ENCODE measurements at regions of chr11 and their contacts with region 1.

Region 1: GRCh38 chr11:1050581-1051355 is 14.2 kb upstream of the MUC6 start:
- DNase-seq: peak; percentile 54 to 87 (median 59)
- ATAC-seq: peak; percentile 83 to 92 (median 88)
- H3K4me3 ChIP-seq: no peak overlapping the region
- H3K27ac ChIP-seq: no peak overlapping the region
- H3K4me1 ChIP-seq: peaks cover 0 to 23% (median 0%) of the 10 kb centered on the region in 12 donors
- H3K27me3 ChIP-seq: peaks cover 0 to 66% (median 12%) of the 10 kb centered on the region in 9 donors
- CTCF ChIP-seq: peak; percentile 74 to 88 (median 83)
- POLR2A ChIP-seq: no peak

Region 2: GRCh38 chr11:848380-848931 is 202.3 kb before region 1 on chr11:
- intact Hi-C with region 1: loop called in 8 of 10 experiments (anchors 1 to 5 kb)
- DNase-seq: peak in 1 of 5 donors; percentile 61
- ATAC-seq: peak in 2 of 4 donors; percentile 7 to 15
- H3K4me3 ChIP-seq: peak overlapping the region in 2 of 12 donors; percentile 57 to 59
- H3K27ac ChIP-seq: no peak overlapping the region
- H3K4me1 ChIP-seq: peaks cover 2 to 83% (median 43%) of the 10 kb centered on the region in 12 donors
- H3K27me3 ChIP-seq: peaks cover 0 to 14% (median 0%) of the 10 kb centered on the region in 9 donors
- CTCF ChIP-seq: peak; percentile 82 to 93 (median 88)
- POLR2A ChIP-seq: no peak

Region 3: DNA sequence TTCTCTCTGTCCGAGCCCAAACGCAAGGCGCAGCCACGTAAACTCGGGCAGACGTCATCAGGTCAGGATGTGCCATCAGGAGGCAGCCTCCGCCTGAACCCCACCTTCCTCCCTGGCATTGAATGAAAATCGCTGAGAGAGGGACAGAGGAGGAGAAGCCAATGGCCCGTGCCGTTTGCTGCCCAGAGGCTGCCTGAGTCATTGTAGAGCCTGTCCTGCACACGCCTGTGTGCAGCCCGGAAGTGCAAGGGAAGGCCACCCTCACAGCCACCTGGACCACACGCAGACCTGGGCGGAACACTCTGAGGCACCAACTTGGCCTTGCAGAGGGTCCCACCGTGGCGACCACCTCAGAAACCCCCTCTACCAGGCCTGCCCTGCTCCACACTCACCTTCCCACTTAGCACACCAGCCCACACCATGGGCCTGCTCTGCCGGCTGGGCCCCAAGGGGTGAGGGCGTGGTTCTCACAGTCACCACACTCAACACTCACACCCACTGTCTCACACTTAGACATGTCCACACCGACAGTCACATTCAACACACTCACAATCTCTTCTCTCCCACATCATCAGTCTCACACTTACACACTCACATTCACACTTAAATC is 149.2 kb before region 1 on chr11:
- intact Hi-C with region 1: loop called in 1 of 10 experiments (anchors 5 kb)
- DNase-seq: no peak
- ATAC-seq: no peak
- H3K4me3 ChIP-seq: no peak overlapping the region
- H3K27ac ChIP-seq: no peak overlapping the region
- H3K4me1 ChIP-seq: no peaks in the 10 kb centered on the region
- H3K27me3 ChIP-seq: no peaks in the 10 kb centered on the region
- CTCF ChIP-seq: no peak
- POLR2A ChIP-seq: no peak

Region 4: GRCh38 chr11:925496-926321 is 125.1 kb before region 1 on chr11 and contains the start of gene AP2A2:
- intact Hi-C with region 1: loop called in 5 of 10 experiments (anchors 10 kb)
- DNase-seq: peak; percentile 91 to 96 (median 92)
- ATAC-seq: peak; percentile 32 to 95 (median 89)
- H3K4me3 ChIP-seq: peak within 1 kb of the TSS; percentile 62 to 98 (median 84)
- H3K27ac ChIP-seq: peak within 1 kb of the TSS; percentile 65 to 94 (median 92)
- H3K4me1 ChIP-seq: peaks cover under 1 to 53% (median 36%) of the 10 kb centered on the region in 12 donors
- H3K27me3 ChIP-seq: no peaks in the 10 kb centered on the region
- CTCF ChIP-seq: peak; percentile 41 to 93 (median 82)
- POLR2A ChIP-seq: peak in 1 of 2 donors; percentile 76
- total RNA-seq, gene AP2A2: 30.2 to 71.4 (median 40.0) TPM